Left ventricle myocardium superior (tissue), 1 donor: ENCODE measurements at regions of chr6 and their contacts with region 1.

Region 1: DNA sequence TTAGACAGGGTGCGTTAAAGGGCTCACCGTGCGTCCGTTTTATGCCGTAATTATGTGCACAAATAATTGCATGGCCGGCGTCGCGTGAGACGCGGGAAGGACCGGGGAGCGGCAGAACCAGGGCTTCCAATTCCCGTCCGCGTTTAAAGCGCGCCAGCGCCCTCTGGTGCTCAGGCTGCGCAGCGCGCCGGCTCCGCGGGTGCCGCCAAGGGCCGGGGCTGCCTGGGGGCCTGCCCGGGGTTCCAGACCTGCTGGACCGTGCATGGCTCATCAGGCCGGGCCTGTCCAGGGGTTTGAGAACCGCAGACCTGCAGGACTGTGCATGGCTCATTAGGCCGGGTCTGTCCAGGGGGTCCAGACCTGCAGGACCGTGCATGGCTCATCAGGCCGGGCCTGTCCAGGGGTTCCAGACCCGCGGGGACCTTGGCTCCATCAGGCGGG is 369.0 kb downstream of the THBS2 start:
- DNase-seq: peak; percentile 88
- ATAC-seq: peak; percentile 94

Region 2: DNA sequence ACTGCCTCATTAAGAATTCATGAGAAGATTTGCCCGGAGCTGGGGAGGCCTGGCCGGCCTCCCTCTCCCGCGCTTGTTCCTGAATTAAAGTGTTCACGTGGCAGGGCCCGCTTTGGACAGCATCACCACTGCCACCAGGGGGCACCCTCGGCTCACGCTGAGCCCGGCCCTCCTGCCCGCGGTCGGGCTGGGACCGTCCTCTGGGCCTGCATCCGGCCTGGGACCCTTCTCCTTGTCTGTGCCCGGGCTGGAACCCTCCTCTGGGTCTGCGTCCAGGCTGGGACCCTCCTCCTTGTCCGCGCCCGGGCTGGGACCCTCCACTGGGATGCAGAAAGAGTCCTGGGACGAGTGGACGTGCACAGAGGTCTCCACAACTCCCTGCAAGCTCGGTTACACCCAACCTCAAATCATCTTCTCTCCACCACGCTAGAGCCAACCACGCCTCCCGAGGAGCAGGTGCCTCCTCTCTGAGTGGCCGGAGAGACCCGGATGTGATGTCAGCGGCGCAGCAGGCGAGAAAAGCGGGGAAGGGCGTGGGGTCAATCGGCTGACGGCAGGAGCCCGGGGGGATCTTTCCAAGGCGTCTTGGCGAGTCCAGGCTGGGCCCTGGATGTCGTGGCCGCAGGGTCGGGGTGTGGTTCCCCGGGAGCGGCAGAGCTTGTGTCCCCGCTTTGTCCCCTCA is 514.2 kb before region 1 on chr6:
- intact Hi-C with region 1: loop called (anchors 10 kb)
- DNase-seq: peak; percentile 86
- ATAC-seq: peak; percentile 93

Region 3: DNA sequence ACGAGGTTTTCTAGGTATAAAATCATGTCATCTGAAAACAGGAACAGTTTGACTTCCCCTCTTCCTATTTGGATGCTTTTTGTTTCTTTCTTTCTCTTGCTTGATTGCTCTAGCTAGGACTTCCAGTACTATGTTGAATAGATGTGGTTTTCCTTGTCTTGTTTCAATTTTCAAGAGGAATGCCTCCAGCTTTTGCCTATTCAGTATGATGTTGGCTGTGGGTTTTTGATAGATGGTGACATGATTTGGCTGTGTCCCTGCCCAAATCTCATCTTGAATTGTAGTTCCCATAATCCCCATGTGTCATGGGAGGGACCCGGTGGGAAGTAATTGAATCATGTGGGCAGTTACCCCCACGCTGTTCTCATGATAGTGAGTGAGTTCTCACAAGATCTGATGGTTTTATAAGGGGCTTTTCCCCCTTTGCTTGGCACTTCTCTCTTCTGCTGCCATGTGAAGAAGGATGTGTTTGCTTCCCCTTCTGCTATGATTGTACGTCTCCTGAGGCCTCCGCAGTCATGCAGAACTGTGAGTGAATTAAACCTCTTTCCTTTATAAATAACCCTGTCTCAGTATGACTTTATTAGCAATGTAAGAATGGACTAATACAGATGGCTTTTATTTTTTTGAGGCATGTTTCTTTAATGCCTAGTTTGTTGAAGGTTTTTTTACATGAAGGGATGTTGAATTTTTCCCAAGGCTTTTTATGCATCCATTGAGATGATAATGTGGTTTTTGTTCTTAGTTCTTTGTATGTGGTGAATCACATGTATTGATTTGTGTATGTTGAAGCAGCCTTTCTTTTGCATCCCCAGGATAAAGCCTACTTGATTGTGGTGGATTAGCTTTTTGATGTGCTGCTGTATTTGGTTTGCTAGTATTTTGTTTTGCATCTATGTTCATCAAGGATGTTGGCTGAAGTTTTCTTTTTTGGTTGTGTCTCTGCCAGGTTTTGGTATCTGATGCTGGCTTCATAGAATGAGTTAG is 129.8 kb after region 1 on chr6:
- intact Hi-C with region 1: no loop called
- DNase-seq: no peak
- ATAC-seq: no peak

Region 4: DNA sequence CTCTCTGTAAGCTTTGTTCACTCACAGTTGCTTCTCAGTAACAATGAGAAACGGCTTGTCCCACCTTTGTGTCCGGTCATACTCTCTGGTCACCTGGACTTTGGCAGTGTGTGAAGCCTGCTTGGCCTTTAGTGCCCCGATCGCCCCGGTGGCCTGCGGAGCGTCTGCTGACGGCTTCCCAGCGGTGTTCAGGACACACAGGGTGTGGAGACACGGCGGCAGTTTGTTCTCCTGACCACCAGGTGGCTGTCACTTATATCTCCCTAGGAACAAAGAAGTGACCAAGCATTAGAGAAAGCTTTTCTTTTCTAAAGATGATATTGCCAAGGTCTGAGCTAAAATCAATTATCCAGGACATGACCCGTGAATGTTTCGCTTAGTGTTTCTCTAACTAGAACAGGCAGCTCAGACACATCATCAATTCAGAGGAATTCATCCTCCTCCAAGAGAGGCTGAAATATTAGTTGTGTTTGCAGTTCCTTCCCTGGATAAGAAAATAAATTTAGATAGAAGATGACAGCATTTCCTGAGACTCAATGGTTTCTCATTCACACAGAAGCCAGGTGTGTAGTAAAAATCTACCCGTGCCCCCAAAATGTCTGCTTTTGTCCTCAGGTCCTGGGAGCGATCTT is 536.4 kb after region 1 on chr6:
- intact Hi-C with region 1: no loop called
- DNase-seq: no peak
- ATAC-seq: no peak